Psoas muscle (tissue), 8 donors: ENCODE measurements at regions of chr10 and their contacts with region 1.

Region 1: GRCh38 chr10:114173921-114174694 is at the start of gene CCDC186:
- DNase-seq: peak; percentile 94 to 96
- ATAC-seq: peak; percentile 98 to 99 (median 99)
- H3K4me3 ChIP-seq: peak within 1 kb of the TSS; percentile 88
- H3K27ac ChIP-seq: peak within 1 kb of the TSS; percentile 93
- H3K4me1 ChIP-seq: peaks cover 7% of the 10 kb centered on the region
- H3K27me3 ChIP-seq: no peaks in the 10 kb centered on the region
- CTCF ChIP-seq: no peak
- total RNA-seq, gene CCDC186: 10.5 to 16.5 (median 11.4) TPM

Region 2: GRCh38 chr10:114110174-114110972 is 63.7 kb before region 1 on chr10:
- intact Hi-C with region 1: no loop called
- DNase-seq: no peak
- ATAC-seq: no peak
- H3K4me3 ChIP-seq: no peak overlapping the region
- H3K27ac ChIP-seq: no peak overlapping the region
- H3K4me1 ChIP-seq: no peaks in the 10 kb centered on the region
- H3K27me3 ChIP-seq: no peaks in the 10 kb centered on the region
- CTCF ChIP-seq: no peak

Region 3: GRCh38 chr10:114266520-114266919 is 92.4 kb after region 1 on chr10:
- intact Hi-C with region 1: loop called in 1 of 2 experiments (anchors 10 kb)
- DNase-seq: no peak
- ATAC-seq: peak; percentile 61 to 83 (median 66)
- H3K4me3 ChIP-seq: no peak overlapping the region
- H3K27ac ChIP-seq: no peak overlapping the region
- H3K4me1 ChIP-seq: peaks cover 8% of the 10 kb centered on the region
- H3K27me3 ChIP-seq: no peaks in the 10 kb centered on the region
- CTCF ChIP-seq: no peak